Activated T-helper 1 cell treated with anti-CD3 and anti-CD28 coated beads, Interleukin-12 subunit alpha, Interleukin-12 subunit beta, Interleukin-2, Interleukin-4 antibody, amounts not matched to agents 30 ng/mL and 10 ng/mL and 1 ng/mL, durations not matched to agents 14 hours and 24 hours and 36 hours (primary cell): ENCODE measurements at regions of chrX and their contacts with region 1.

Region 1: DNA sequence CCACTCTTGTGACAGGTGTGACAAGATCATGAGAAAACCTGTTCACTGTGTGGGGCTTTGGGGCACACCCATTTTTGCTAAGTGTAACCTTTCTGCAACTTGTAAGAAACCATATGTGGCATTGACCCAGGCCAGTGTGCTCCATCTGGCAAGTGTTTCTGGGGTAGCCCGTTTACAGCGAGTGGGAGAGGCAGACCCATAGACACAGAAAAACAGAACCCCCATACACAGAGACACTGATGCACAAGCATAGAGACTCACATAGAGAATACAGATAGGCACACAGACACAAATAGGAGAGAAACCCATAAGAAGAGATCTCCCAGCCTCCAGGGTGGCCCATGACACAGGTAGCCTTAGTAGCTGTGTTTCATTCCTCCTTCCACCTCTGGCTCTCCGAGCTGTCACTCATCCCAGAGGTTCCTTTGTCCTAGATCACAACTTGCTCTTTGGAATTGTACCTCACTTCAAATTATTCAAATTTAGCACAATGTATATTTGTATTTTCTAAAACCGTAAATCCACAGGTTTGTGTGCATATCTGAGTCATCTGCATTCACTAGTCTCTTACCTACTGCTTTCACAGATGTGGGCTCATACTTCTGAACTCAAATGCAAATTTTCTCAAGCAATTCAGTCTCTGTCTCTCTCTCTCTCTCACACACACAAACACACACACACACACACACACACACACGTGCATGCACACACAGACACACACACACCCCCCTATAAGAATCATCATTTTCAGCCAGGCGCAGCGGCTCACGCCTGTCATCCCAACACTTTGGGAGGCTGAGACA is 114.4 kb downstream of the SH3KBP1 start:
- DNase-seq: no peak
- H3K4me3 Mint-ChIP-seq: peak overlapping the region; percentile 68
- H3K27ac Mint-ChIP-seq: peak overlapping the region; percentile 97
- H3K4me1 Mint-ChIP-seq: peaks cover 57% of the 10 kb centered on the region
- H3K27me3 Mint-ChIP-seq: no peaks in the 10 kb centered on the region

Region 2: DNA sequence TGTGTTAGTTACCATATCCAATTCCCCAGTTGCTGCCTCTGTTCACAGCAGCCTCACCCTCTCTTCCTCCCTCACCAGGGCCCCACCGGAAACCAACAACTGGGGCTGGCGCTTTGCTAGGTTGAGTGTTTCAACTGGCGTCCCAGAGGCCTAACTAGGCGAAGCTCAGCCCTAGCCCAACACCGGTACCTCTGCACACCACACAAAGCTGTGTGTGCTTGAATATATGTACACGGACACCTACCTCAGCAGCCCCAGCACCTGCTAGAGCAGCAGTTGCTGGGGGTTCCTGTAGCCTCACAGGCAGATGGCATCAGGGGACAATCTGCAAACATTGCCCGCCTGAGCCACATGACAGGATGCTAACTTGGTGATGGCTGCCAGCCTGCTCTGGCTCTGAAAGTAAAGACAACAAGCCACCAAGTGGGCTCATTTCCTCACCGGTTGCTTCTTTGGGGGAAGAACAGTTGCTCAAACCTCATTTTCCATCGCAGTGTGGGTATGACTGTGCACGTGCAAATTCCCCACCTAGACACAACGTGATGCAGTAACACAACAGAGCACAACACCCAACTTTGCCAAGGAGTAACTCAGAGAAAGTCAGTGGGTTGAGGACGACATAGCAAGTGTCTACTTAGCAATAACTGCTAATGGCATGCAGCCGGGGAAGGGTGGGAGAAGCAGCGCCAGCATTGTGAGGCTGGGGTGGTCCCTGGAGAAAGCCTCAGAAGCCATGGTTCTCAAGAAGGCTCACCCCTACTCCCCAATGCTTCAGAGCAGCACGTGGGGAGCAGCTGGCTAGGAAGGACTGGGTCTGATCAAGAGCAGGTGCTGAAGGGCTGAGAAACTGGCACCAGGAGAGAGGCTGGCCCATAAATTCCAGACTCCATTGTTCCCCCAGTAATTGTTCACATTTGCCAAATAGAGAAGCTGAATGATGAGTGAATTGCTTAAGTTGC is 25.1 kb before region 1 on chrX:
- intact Hi-C with region 1: loop called (anchors 1 kb)
- DNase-seq: peak; percentile 72
- H3K4me3 Mint-ChIP-seq: peak overlapping the region; percentile 67
- H3K27ac Mint-ChIP-seq: peak overlapping the region; percentile 93
- H3K4me1 Mint-ChIP-seq: peaks cover 91% of the 10 kb centered on the region
- H3K27me3 Mint-ChIP-seq: no peaks in the 10 kb centered on the region

Region 3: GRCh38 chrX:19785647-19786046 is 12.6 kb after region 1 on chrX:
- intact Hi-C with region 1: loop called (anchors 1 kb)
- DNase-seq: no peak
- H3K4me3 Mint-ChIP-seq: no peak overlapping the region
- H3K27ac Mint-ChIP-seq: peak overlapping the region; percentile 73
- H3K4me1 Mint-ChIP-seq: peaks cover 46% of the 10 kb centered on the region
- H3K27me3 Mint-ChIP-seq: no peaks in the 10 kb centered on the region

Region 4: GRCh38 chrX:19791562-19791961 is 18.5 kb after region 1 on chrX:
- intact Hi-C with region 1: loop called (anchors 2 kb)
- DNase-seq: no peak
- H3K4me3 Mint-ChIP-seq: peak overlapping the region; percentile 53
- H3K27ac Mint-ChIP-seq: peak overlapping the region; percentile 77
- H3K4me1 Mint-ChIP-seq: peaks cover 62% of the 10 kb centered on the region
- H3K27me3 Mint-ChIP-seq: no peaks in the 10 kb centered on the region

Region 5: GRCh38 chrX:19799319-19800182 is 26.5 kb after region 1 on chrX:
- intact Hi-C with region 1: loop called (anchors 2 kb)
- DNase-seq: peak; percentile 27
- H3K4me3 Mint-ChIP-seq: peak overlapping the region; percentile 88
- H3K27ac Mint-ChIP-seq: peak overlapping the region; percentile 95
- H3K4me1 Mint-ChIP-seq: peaks cover 77% of the 10 kb centered on the region
- H3K27me3 Mint-ChIP-seq: no peaks in the 10 kb centered on the region

Region 6: GRCh38 chrX:19840899-19841648 is 68.0 kb after region 1 on chrX:
- intact Hi-C with region 1: loop called (anchors 2 kb)
- DNase-seq: peak; percentile 37
- H3K4me3 Mint-ChIP-seq: peak overlapping the region; percentile 41
- H3K27ac Mint-ChIP-seq: peak overlapping the region; percentile 85
- H3K4me1 Mint-ChIP-seq: peaks cover 41% of the 10 kb centered on the region
- H3K27me3 Mint-ChIP-seq: no peaks in the 10 kb centered on the region